HEK293 (cell line): ENCODE measurements at regions of chr14 and their contacts with region 1.

Region 1: GRCh38 chr14:91649930-91650329 is 82.0 kb downstream of the CATSPERB start:
- H3K4me3 ChIP-seq: no peak overlapping the region
- H3K27ac ChIP-seq: no peak overlapping the region
- H3K4me1 ChIP-seq: no peaks in the 10 kb centered on the region
- CTCF ChIP-seq: no peak

Region 2: DNA sequence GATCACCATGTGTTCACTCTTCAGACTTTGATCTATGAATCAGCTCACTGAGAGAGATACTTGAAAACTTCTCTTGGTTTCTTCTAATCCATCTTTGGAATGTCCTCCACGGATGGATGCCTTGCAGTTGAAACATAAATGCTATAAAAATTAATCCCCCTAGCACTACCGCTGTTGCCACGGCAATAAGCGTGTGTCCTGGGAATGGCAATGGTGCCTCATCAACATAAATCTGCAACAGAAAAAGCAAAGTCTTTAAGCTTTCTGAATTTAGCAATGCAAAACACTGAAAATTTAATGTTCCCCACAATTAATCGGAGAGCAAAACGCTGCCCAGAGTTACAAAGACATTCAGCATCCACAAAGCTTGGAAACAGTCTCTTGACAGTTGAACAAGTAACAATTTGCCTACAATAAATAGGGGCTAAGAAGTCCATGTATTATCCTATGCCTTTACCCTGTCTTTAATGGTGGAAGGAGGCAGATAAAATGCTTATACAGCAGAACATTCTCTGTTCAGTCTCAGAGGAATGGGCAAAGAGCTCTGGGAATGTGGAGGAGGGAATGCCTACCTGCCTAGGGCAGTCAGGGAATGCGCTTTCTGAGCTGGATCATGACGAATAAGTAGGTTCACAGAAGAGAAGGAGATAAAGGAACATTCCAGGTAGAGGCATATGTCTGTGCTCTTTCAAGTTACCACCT is 68.9 kb before region 1 on chr14:
- CTCF ChIA-PET with region 1: no interaction called
- POLR2A ChIA-PET with region 1: no interaction called
- H3K4me3 ChIP-seq: no peak overlapping the region
- H3K27ac ChIP-seq: no peak overlapping the region
- H3K4me1 ChIP-seq: no peaks in the 10 kb centered on the region
- CTCF ChIP-seq: no peak

Region 3: DNA sequence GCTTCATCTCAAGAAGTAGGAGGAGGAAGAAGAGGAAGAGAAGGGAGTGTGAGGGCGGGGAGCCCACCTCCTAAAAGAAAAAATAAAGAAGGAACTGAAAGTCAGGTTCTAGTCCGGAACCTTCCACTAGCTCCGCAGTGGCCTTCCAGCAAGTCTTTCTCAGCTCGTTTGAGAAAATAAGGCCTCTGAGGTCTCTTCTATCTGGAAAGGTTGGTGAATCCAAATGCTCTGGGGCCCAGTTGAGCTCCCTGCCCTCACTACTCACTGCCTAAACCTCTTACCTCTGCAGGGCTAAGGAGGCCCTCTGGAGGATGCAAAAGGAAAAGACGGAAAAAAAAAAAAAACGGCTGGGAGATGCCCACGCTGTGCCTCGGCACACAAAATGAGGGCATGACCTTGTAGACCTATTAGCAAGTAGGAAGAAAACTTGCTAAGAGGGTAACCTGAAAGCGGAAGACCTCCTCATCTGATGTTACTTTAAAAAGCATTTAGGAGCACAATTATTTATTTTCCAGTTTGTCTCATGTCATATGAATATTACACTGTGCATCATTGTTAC is 261.6 kb after region 1 on chr14:
- CTCF ChIA-PET with region 1: interaction called, 17 read pairs
- POLR2A ChIA-PET with region 1: no interaction called
- H3K4me3 ChIP-seq: no peak overlapping the region
- H3K27ac ChIP-seq: no peak overlapping the region
- H3K4me1 ChIP-seq: no peaks in the 10 kb centered on the region
- CTCF ChIP-seq: peak; percentile 48